ENCODE measurements at regions of chr3 and their contacts with region 1.

Region 1: DNA sequence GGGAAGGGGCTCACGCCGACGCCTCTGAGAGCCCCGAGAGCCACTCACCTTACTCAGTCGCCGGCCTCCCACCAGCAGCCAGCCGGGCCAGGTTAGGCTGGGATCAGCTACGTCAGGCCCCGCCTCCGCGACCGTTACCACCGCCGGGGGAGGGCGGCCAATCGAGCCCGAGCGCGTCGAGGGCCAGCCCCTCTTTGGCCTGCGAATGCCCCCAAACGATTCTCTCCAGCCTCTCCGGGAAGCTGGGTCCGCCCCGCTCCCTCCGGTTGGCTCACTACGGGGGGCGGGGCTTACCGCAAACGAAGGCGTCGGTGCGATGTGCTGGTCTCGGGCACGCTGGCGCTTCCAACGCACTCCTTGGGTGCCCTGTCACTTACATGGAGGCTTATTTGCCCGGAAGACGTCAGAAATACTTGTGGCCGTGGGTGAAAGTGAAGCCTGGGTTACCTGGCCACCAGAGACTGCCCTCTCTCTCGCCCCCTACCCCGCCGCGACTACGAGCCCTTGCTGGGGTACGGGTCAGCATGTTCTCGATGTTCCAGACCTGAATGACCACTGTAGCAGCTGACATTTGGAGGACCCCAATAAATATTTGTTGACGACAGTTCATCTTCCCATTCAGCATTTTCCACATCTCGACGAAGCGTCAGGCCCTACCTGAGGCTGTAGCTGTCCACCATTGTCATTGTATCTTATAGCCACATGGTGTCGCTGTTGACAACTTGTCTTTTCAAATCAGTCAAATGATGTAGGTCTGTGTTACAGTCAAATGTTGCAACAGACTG is at the start of gene CEP70:
- DNase-seq: peak; percentile 93 to 97 (median 95)
- ATAC-seq: peak; percentile 98 to 99 (median 99)
- H3K4me3 ChIP-seq: peak within 1 kb of the TSS; percentile 36 to 87 (median 74)
- H3K27ac ChIP-seq: peak within 1 kb of the TSS; percentile 67 to 93 (median 86)
- H3K4me1 ChIP-seq: peaks cover 0 to 17% (median 9%) of the 10 kb centered on the region in 12 donors
- H3K27me3 ChIP-seq: no peaks in the 10 kb centered on the region
- CTCF ChIP-seq: peak; percentile 75 to 95 (median 88)
- POLR2A ChIP-seq: peak; percentile 87 to 93
- total RNA-seq, gene CEP70: 10.1 to 29.8 (median 23.7) TPM

Region 2: DNA sequence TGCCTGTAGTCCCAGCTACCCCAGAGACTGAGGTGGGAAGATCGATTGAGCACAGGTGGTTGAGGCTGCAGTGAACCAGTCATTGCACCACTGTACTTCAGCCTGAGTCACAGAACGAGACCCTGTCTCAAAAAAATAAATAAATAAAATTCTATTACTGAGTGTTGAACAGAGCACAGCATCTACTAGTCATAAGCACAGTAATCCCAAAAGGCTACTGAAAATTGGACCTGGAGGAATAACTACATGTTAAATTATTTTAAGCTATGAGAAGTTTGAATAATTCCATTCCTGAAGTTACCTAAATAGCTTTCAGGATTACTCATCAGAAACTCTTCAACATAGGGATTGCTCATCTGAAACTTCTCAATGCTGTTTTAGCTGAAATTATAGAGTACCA is 363.8 kb before region 1 on chr3:
- intact Hi-C with region 1: no loop called
- DNase-seq: no peak
- ATAC-seq: no peak
- H3K4me3 ChIP-seq: no peak overlapping the region
- H3K27ac ChIP-seq: no peak overlapping the region
- H3K4me1 ChIP-seq: peaks cover 0 to 7% (median 0%) of the 10 kb centered on the region in 12 donors
- H3K27me3 ChIP-seq: no peaks in the 10 kb centered on the region
- CTCF ChIP-seq: no peak
- POLR2A ChIP-seq: no peak

Region 3: DNA sequence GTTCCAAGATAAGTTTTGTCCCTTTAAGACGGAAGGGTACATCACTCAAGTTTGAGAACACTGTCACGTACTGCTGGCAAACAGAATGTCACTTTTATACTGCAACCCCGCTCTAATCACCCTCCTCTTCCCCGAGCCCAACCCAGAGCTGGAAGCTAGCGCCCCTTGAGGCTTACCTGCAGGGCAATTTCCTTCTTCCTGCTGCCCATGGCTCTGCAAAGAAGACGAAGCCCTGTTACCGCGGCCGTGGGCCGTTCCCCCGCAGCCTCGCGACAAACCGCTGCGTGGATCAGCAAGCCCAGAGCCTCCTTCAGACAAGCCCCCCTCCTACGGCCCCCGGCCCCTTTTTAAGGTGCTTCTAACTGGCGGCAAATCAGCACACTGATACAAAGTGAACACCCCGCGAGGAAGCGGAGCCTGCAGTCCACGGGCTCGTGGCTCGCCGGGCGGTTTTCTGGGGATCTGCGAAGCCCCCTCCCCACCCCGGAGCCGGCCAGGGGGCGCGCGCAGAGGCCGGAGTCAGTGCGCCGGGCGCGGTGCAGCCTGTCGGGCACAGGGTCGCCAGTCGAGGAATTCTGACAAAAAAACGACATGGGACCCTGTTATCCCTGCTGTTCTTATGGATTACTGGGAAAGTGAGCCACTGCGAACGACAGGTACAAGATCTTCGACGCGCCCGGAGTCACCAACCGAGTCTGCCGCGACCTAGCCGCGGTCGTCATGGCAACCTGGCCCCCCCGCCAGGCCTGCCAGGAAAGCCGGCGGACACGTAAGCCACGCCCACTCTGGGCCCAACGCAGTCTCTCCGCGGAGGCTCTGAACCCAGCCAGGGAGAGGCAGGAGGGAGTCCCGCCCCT is 265.0 kb before region 1 on chr3 and contains the start of gene NME9:
- intact Hi-C with region 1: loop called in 4 of 10 experiments (anchors 10 kb)
- DNase-seq: peak; percentile 89 to 94 (median 92)
- ATAC-seq: peak; percentile 94 to 98 (median 96)
- H3K4me3 ChIP-seq: peak within 1 kb of the TSS; percentile 47 to 72 (median 66)
- H3K27ac ChIP-seq: peak within 1 kb of the TSS in 9 of 12 donors; percentile 16 to 69 (median 53)
- H3K4me1 ChIP-seq: peaks cover 0 to 18% (median 9%) of the 10 kb centered on the region in 12 donors
- H3K27me3 ChIP-seq: no peaks in the 10 kb centered on the region
- CTCF ChIP-seq: peak; percentile 17 to 62 (median 42)
- POLR2A ChIP-seq: no peak
- total RNA-seq, gene NME9: not detected

Region 4: GRCh38 chr3:138479438-138479863 is 114.9 kb before region 1 on chr3:
- intact Hi-C with region 1: loop called in 2 of 10 experiments (anchors 10 kb)
- DNase-seq: no peak
- ATAC-seq: peak in 3 of 4 donors; percentile 32 to 67 (median 45)
- H3K4me3 ChIP-seq: no peak overlapping the region
- H3K27ac ChIP-seq: no peak overlapping the region
- H3K4me1 ChIP-seq: peaks cover 0 to 4% (median 0%) of the 10 kb centered on the region in 12 donors
- H3K27me3 ChIP-seq: no peaks in the 10 kb centered on the region
- CTCF ChIP-seq: peak; percentile 28 to 67 (median 56)
- POLR2A ChIP-seq: no peak

Region 5: DNA sequence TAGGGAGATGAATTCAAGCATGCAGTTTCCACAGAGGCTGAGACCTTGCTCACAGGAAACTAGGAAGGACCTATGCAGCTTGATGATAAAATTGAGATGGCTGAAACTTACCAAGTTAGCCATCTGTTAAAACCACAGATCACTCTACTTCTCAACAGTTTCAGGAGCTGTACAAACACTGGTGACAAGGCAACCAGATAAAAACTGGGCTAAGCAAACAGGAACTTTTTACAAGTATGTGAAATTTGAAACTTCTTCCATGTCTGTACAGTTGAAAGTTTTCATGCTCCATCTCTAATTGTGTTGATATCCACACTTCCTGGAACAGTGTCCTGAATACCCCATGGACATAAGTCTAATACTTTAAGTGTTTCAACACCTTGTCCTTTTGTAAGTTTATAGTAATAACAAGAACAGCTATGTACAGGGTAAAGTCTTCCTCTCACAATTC is 92.5 kb after region 1 on chr3:
- intact Hi-C with region 1: loop called in 5 of 10 experiments (anchors 5 to 10 kb)
- DNase-seq: no peak
- ATAC-seq: peak in 1 of 4 donors; percentile 28
- H3K4me3 ChIP-seq: no peak overlapping the region
- H3K27ac ChIP-seq: no peak overlapping the region
- H3K4me1 ChIP-seq: peaks cover 0 to 2% (median 0%) of the 10 kb centered on the region in 12 donors
- H3K27me3 ChIP-seq: no peaks in the 10 kb centered on the region
- CTCF ChIP-seq: no peak
- POLR2A ChIP-seq: no peak

Region 6: GRCh38 chr3:138915503-138916498 is 321.5 kb after region 1 on chr3:
- intact Hi-C with region 1: loop called in 9 of 10 experiments (anchors 1 to 5 kb)
- DNase-seq: peak; percentile 91 to 97 (median 94)
- ATAC-seq: peak; percentile 97 to 98 (median 98)
- H3K4me3 ChIP-seq: peak overlapping the region; percentile 57 to 90 (median 84)
- H3K27ac ChIP-seq: peak overlapping the region; percentile 82 to 98 (median 96)
- H3K4me1 ChIP-seq: peaks cover 0 to 16% (median 6%) of the 10 kb centered on the region in 12 donors
- H3K27me3 ChIP-seq: no peaks in the 10 kb centered on the region
- CTCF ChIP-seq: peak; percentile 78 to 97 (median 87)
- POLR2A ChIP-seq: peak in 1 of 2 donors; percentile 29

Region 7: GRCh38 chr3:139302084-139302800 is 707.9 kb after region 1 on chr3:
- intact Hi-C with region 1: no loop called
- DNase-seq: peak in 4 of 5 donors; percentile 36 to 79 (median 56)
- ATAC-seq: peak; percentile 92 to 98 (median 95)
- H3K4me3 ChIP-seq: no peak overlapping the region
- H3K27ac ChIP-seq: peak overlapping the region in 6 of 12 donors; percentile 18 to 49 (median 34)
- H3K4me1 ChIP-seq: peaks cover 0 to 20% (median 8%) of the 10 kb centered on the region in 12 donors
- H3K27me3 ChIP-seq: no peaks in the 10 kb centered on the region
- CTCF ChIP-seq: no peak
- POLR2A ChIP-seq: no peak

Region 8: DNA sequence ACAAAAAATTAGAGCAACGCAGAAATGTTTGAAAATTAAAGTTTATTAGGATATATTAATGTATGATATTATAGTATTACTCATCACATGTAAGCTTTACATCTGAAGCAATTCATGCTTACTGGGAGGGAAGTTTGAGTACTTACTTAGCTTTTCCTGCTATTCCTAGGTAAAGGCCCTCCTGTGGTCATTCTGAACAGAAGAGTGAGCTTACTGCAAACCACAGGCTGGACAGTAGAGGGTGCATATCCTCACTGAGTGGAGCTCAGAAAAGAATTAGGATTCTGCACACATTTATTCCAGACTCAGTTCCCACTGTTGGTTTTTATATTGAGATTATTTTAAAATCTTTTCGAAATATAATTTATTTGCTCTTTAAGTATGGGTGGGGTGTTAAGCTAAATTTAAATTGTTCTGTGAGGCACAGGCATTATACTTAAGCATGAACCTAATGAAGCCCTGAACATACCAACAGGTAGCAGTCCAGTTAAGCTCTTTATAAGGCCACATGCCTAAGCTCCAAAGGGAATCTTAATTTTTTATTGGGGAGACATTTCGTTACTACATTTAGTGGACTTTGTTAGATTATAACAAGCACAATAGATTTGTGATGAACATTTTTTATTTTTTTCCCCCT is 759.7 kb after region 1 on chr3:
- intact Hi-C with region 1: loop called in 1 of 10 experiments (anchors 10 kb)
- DNase-seq: no peak
- ATAC-seq: peak in 3 of 4 donors; percentile 61 to 64 (median 63)
- H3K4me3 ChIP-seq: no peak overlapping the region
- H3K27ac ChIP-seq: no peak overlapping the region
- H3K4me1 ChIP-seq: peaks cover 0 to 3% (median 0%) of the 10 kb centered on the region in 12 donors
- H3K27me3 ChIP-seq: no peaks in the 10 kb centered on the region
- CTCF ChIP-seq: peak in 11 of 12 donors; percentile 13 to 79 (median 39)
- POLR2A ChIP-seq: no peak